ENCODE measurements at regions of chr16 and their contacts with region 1.

Region 1: DNA sequence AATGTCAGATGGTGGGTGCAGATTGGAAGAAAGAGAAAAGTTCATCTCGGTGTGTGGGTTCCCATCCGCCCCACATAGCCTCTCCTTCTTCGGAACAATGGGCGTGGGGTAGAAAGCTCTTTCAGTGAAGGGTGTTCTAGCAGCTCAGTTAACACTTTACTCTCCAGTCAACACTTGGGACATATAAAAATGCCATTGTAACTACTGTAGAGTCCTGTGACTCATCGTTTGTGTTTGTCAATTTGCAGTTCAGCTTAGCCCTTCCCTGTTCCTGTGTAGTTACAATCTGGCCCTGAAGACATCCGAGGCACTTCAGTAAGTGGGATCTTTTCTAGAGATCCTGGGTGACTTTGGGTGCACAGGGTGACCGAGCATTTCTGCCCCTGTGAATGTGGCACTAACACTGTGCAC is 11.5 kb upstream of the CLEC18C start:
- DNase-seq: no peak
- H3K4me3 ChIP-seq: no peak overlapping the region
- H3K27ac ChIP-seq: no peak overlapping the region
- H3K4me1 ChIP-seq: peaks cover 0 to 2% (median 0%) of the 10 kb centered on the region in 4 experiments
- H3K27me3 ChIP-seq: no peaks in the 10 kb centered on the region

Region 2: GRCh38 chr16:70151391-70151790 is 10.7 kb before region 1 on chr16:
- CTCF ChIA-PET with region 1: interaction called, 14 read pairs
- POLR2A ChIA-PET with region 1: no interaction called
- DNase-seq: no peak
- H3K4me3 ChIP-seq: no peak overlapping the region
- H3K27ac ChIP-seq: no peak overlapping the region
- H3K4me1 ChIP-seq: no peaks in the 10 kb centered on the region
- H3K27me3 ChIP-seq: no peaks in the 10 kb centered on the region